ENCODE measurements at regions of chr5 and their contacts with region 1.

Region 1: GRCh38 chr5:175840050-175840841 is 31.1 kb upstream of the CPLX2 start:
- DNase-seq: no peak
- H3K4me3 ChIP-seq: no peak overlapping the region
- H3K27ac ChIP-seq: no peak overlapping the region
- H3K4me1 ChIP-seq: peaks cover 0 to 27% (median 19%) of the 10 kb centered on the region in 4 experiments; a peak in 6 of 7 replicates
- H3K27me3 ChIP-seq: no peaks in the 10 kb centered on the region; a peak in 1 of 7 replicates
- CTCF ChIP-seq: peak in 2 of 3 experiments; percentile 37 to 62; a peak in 2 of 4 replicates
- EP300 ChIP-seq: no peak
- POLR2A ChIP-seq: no peak
- RAD21 ChIP-seq: peak; percentile 17 to 39; a peak in 2 of 4 replicates

Region 2: DNA sequence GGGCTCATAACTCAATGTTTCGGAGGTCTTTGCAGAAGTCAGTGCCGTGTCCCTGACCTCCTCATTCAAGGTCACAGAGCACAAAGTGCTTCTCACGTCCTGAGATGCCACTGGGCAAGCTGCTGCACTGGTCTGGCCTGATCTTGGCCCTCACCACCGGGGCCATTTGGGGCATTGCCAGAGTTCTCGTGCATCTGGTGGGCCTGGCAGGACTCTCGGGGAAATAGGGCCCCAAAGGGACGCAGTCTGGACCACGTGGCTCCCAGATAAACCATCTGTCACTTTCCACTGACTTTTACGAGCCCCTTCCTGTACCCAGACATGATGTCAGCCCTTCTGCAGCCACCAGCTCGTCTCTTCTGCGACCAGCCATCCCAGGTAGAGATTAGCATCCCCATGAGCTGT is 127.6 kb before region 1 on chr5:
- CTCF ChIA-PET with region 1: no interaction called
- POLR2A ChIA-PET with region 1: no interaction called
- DNase-seq: no peak
- H3K4me3 ChIP-seq: no peak overlapping the region
- H3K27ac ChIP-seq: no peak overlapping the region
- H3K4me1 ChIP-seq: no peaks in the 10 kb centered on the region
- H3K27me3 ChIP-seq: peaks cover 0 to 6% (median 0%) of the 10 kb centered on the region in 4 experiments; a peak in 1 of 7 replicates
- CTCF ChIP-seq: no peak
- EP300 ChIP-seq: no peak
- POLR2A ChIP-seq: no peak
- RAD21 ChIP-seq: no peak

Region 3: DNA sequence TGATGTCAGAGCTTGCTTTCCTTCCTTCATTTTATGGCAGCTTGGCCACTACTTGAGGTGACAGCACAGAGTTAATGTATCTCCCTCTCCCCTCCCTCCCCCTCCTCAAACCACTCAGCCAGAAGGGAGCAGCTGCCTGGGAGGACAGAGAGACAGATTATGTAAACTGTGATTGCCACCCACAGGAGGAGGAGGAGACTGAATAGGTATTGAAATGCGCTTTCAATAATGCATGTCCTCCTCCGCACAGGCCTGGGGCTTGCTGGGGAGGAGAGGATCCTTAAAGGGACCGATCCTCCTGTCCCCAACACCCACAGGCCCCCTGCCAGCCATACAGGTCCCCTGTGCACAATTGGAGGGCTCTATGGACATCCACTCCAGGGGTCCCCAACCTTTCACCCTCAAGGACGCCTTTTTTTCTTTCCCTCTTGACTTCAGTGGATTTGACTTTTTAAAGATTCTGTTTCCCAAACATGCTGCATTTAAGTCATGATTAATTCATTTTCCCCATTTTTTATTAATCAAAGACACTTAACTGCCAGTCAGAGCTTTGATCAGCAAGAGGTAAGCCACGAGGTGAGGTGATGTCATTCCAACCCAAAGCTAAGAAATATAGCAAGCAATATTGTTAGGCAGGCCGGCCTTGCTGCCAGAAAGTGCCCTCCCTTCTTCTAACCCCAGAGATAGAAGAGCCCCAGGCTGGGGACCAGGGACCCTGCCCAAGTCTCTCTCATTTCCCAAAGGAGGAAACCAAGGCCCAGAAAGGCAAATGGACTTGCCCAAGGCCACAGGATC is 16.3 kb before region 1 on chr5:
- CTCF ChIA-PET with region 1: interaction called, 16 read pairs
- POLR2A ChIA-PET with region 1: no interaction called
- DNase-seq: no peak
- H3K4me3 ChIP-seq: no peak overlapping the region; a peak in 1 of 8 replicates
- H3K27ac ChIP-seq: no peak overlapping the region
- H3K4me1 ChIP-seq: peaks cover 2 to 16% (median 15%) of the 10 kb centered on the region in 4 experiments
- H3K27me3 ChIP-seq: no peaks in the 10 kb centered on the region
- CTCF ChIP-seq: no peak; a peak in 1 of 4 replicates
- EP300 ChIP-seq: no peak
- POLR2A ChIP-seq: no peak
- RAD21 ChIP-seq: peak; percentile 24 to 33; a peak in 3 of 4 replicates

Region 4: GRCh38 chr5:175861337-175862130 is 21.3 kb after region 1 on chr5:
- CTCF ChIA-PET with region 1: interaction called, 35 read pairs
- POLR2A ChIA-PET with region 1: interaction called, 3 read pairs
- DNase-seq: no peak
- H3K4me3 ChIP-seq: no peak overlapping the region
- H3K27ac ChIP-seq: no peak overlapping the region
- H3K4me1 ChIP-seq: peaks cover 0 to 7% (median 3%) of the 10 kb centered on the region in 4 experiments; a peak in 2 of 7 replicates
- H3K27me3 ChIP-seq: no peaks in the 10 kb centered on the region; a peak in 1 of 7 replicates
- CTCF ChIP-seq: no peak
- EP300 ChIP-seq: no peak
- POLR2A ChIP-seq: no peak
- RAD21 ChIP-seq: no peak

Region 5: DNA sequence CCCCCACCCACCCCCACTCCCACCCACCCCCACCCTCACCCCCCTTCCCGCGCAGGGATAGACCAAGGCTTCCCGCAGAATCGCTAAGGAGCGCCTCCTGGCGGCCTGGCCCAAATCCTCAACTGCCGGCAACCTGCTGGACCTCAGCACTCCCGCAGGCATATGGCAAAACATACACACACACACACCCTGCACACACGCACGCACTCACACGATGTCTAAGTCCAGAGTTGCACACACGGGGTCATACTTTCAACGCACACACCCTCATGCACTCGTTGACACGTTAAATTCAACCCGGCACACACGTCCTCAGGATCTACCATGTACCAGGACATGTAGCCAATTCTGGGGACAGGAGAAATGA is 32.8 kb after region 1 on chr5:
- CTCF ChIA-PET with region 1: interaction called, 43 read pairs
- POLR2A ChIA-PET with region 1: no interaction called
- DNase-seq: peak in 1 of 2 experiments; percentile 92
- H3K4me3 ChIP-seq: peak overlapping the region in 2 of 4 experiments; percentile 38; a peak in 4 of 8 replicates
- H3K27ac ChIP-seq: no peak overlapping the region
- H3K4me1 ChIP-seq: peaks cover 6 to 14% (median 8%) of the 10 kb centered on the region in 4 experiments
- H3K27me3 ChIP-seq: peaks cover 0 to 19% (median 6%) of the 10 kb centered on the region in 4 experiments; a peak in 3 of 7 replicates
- CTCF ChIP-seq: peak; percentile 69 to 84 (median 77)
- EP300 ChIP-seq: no peak
- POLR2A ChIP-seq: no peak
- RAD21 ChIP-seq: peak; percentile 50 to 56